Lower leg skin (tissue), 4 donors: ENCODE measurements at regions of chr18 and their contacts with region 1.

Region 1: GRCh38 chr18:60549338-60549960 is 176.9 kb upstream of the MC4R start:
- DNase-seq: peak in 1 of 2 donors; percentile 37
- H3K4me3 ChIP-seq: no peak overlapping the region
- CTCF ChIP-seq: no peak
- POLR2A ChIP-seq: no peak

Region 2: GRCh38 chr18:59994357-59994756 is 555.1 kb before region 1 on chr18:
- intact Hi-C with region 1: loop called (anchors 5 kb)
- DNase-seq: no peak
- H3K4me3 ChIP-seq: no peak overlapping the region
- CTCF ChIP-seq: no peak
- POLR2A ChIP-seq: no peak

Region 3: GRCh38 chr18:60215432-60215831 is 334.0 kb before region 1 on chr18:
- intact Hi-C with region 1: no loop called
- DNase-seq: no peak
- H3K4me3 ChIP-seq: no peak overlapping the region
- CTCF ChIP-seq: no peak
- POLR2A ChIP-seq: no peak

Region 4: GRCh38 chr18:60232541-60232940 is 316.9 kb before region 1 on chr18:
- intact Hi-C with region 1: no loop called
- DNase-seq: no peak
- H3K4me3 ChIP-seq: no peak overlapping the region
- CTCF ChIP-seq: no peak
- POLR2A ChIP-seq: no peak

Region 5: GRCh38 chr18:60599267-60599666 is 49.8 kb after region 1 on chr18:
- intact Hi-C with region 1: no loop called
- DNase-seq: no peak
- H3K4me3 ChIP-seq: no peak overlapping the region
- CTCF ChIP-seq: no peak
- POLR2A ChIP-seq: no peak